Sigmoid colon (tissue), 7 donors: ENCODE measurements at regions of chr7 and their contacts with region 1.

Region 1: GRCh38 chr7:15305002-15305600 is 256.7 kb downstream of the AGMO start:
- DNase-seq: peak; percentile 72
- H3K4me3 ChIP-seq: no peak overlapping the region
- H3K27ac ChIP-seq: no peak overlapping the region
- H3K4me1 ChIP-seq: no peaks in the 10 kb centered on the region
- H3K27me3 ChIP-seq: no peaks in the 10 kb centered on the region
- CTCF ChIP-seq: peak; percentile 34 to 73 (median 60)
- EP300 ChIP-seq: no peak
- POLR2A ChIP-seq: no peak

Region 2: GRCh38 chr7:15720849-15721471 is 415.9 kb after region 1 on chr7:
- intact Hi-C with region 1: loop called (anchors 10 kb)
- DNase-seq: peak; percentile 66
- H3K4me3 ChIP-seq: no peak overlapping the region
- H3K27ac ChIP-seq: no peak overlapping the region
- H3K4me1 ChIP-seq: no peaks in the 10 kb centered on the region
- H3K27me3 ChIP-seq: no peaks in the 10 kb centered on the region
- CTCF ChIP-seq: peak; percentile 25 to 72 (median 52)
- EP300 ChIP-seq: no peak
- POLR2A ChIP-seq: no peak